ENCODE measurements at regions of chr6 and their contacts with region 1.

Region 1: DNA sequence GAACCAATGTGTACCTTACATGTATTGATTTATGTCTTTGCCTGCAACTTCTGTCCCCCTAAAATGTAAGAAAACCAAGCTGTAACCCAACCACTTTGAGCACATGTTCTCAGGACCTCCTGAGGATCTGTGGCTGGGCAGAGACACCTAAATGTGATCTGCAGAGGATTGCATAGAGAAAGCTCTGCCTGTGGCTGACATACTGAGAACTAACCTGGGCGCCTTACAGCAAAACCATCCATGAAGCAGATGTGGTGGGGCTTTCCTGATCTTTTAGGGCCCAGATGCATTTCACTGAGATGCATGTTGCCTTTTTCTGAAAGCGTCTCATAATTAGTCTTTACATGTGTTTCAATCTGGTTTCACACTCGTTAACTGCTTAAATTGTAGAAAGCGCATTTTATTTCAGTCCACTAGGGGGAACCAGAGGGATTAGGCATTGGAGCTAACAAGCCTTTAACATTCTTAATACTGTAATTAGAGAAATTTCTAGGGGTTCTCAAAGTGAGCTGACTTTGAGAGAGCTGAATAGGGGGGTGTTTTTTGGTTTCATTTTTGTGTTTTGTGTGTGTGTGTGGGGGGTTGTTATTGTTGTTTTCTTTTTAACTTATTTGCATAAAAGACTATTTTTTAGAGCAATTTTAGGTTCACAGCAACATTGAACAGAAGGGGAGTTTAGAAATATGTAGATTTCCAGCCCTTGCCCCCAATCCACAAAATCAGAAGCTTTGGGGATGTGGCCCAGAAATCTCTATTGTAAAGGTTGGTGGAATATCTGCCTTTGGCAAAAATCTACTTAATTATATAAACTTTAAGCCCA is 50.9 kb upstream of the FAM184A start:
- DNase-seq: peak; percentile 20 to 60
- ATAC-seq: peak; percentile 47 to 81; a peak in 3 of 6 replicates
- H3K4me3 ChIP-seq: no peak overlapping the region
- H3K27ac ChIP-seq: no peak overlapping the region
- H3K4me1 ChIP-seq: peaks cover 9% of the 10 kb centered on the region
- CTCF ChIP-seq: peak; percentile 59
- EP300 ChIP-seq: no peak
- POLR2A ChIP-seq: no peak
- RAD21 ChIP-seq: peak; percentile 57 to 60

Region 2: DNA sequence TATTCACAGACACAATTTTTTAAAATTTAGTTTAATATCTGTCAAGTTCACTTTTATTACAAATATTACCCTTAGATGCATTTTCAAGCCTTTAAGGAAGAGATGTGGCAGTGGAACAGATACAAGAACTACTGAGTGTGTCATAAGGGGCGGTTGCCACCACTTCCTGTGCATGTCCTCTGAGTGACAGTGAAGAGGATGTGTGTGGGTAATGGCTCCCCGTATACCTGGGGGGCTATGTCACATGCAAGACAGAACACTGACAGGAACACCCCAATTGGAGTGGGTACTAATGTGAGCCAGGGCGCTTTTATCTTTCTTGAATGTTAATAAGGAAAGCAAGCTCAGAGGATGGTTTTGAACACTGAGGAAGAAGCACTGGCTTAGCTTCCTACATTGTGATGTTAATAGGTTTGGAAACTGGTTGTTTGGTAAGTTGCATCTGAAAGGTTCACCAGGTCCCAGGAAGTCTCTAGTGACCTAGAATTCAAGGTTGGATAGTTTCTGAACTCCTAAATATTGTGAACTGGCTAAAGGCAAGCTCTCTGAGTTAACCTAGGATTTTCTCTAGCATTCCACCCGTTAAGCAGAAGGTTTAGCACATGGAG is 318.8 kb before region 1 on chr6:
- CTCF ChIA-PET with region 1: no interaction called
- POLR2A ChIA-PET with region 1: no interaction called
- DNase-seq: no peak
- ATAC-seq: no peak
- H3K4me3 ChIP-seq: no peak overlapping the region
- H3K27ac ChIP-seq: no peak overlapping the region
- H3K4me1 ChIP-seq: no peaks in the 10 kb centered on the region
- CTCF ChIP-seq: no peak
- EP300 ChIP-seq: no peak
- POLR2A ChIP-seq: no peak
- RAD21 ChIP-seq: no peak

Region 3: GRCh38 chr6:119147101-119148053 is 18.0 kb after region 1 on chr6:
- CTCF ChIA-PET with region 1: interaction called, 27 read pairs
- POLR2A ChIA-PET with region 1: no interaction called
- DNase-seq: peak; percentile 65 to 79
- ATAC-seq: peak; percentile 90 to 92
- H3K4me3 ChIP-seq: 0 out of 3 replicates have a peak overlapping the region, but pooled peaks have one; percentile 6
- H3K27ac ChIP-seq: peak overlapping the region; percentile 41 to 70; a peak in 4 of 6 replicates
- H3K4me1 ChIP-seq: peaks cover 19% of the 10 kb centered on the region
- CTCF ChIP-seq: no peak
- EP300 ChIP-seq: no peak
- POLR2A ChIP-seq: no peak
- RAD21 ChIP-seq: no peak